Activated CD4-positive, alpha-beta T cell treated with anti-CD3 and anti-CD28 coated beads, Interleukin-2, amount 10 ng/mL, durations not matched to agents 24 days and 14 days (primary cell): ENCODE measurements at regions of chr17 and their contacts with region 1.

Region 1: GRCh38 chr17:43994272-43995149 is 9.9 kb upstream of the NAGS start:
- DNase-seq: peak; percentile 91
- H3K4me3 Mint-ChIP-seq: peak overlapping the region; percentile 44
- H3K27ac Mint-ChIP-seq: no peak overlapping the region
- H3K4me1 Mint-ChIP-seq: no peaks in the 10 kb centered on the region
- H3K27me3 Mint-ChIP-seq: peaks cover 26% of the 10 kb centered on the region

Region 2: DNA sequence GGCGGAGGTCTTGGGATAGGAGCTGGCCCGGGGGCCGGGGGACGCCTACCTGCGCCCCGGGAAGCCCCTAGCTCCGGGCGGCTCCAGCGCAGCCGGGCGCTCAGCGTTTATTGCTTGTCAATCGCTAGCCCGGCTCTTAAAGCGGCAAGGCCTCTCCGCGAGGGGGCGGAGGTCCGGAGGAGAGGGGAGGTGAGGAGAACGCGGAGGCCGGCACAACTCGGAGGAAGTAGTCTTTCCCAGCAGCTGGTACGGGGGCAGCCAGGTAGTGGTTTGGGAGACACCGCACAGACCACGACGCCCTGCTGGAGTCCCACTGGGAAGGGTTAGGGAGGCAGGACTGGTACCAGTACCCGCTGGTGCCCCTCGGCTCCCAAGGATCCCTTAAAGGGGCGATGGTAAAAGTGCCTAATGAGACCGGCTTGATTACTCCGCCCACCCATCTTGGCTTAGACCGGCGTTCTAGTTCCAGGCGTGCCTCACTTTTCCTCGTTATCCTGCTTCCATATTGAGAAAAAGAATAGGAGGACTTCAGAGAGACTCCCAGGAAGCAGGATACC is 87.0 kb before region 1 on chr17 and contains the start of gene MPP2:
- intact Hi-C with region 1: loop called (anchors 5 kb)
- DNase-seq: peak; percentile 78
- H3K4me3 Mint-ChIP-seq: peak within 1 kb of the TSS; percentile 53
- H3K27ac Mint-ChIP-seq: no peak within 1 kb of the TSS
- H3K4me1 Mint-ChIP-seq: peaks cover 3% of the 10 kb centered on the region
- H3K27me3 Mint-ChIP-seq: peaks cover 52% of the 10 kb centered on the region
- total RNA-seq, gene MPP2: 0.83 and 1.3 TPM in 2 replicates